OCI-LY7 (cell line): ENCODE measurements at regions of chr6 and their contacts with region 1.

Region 1: GRCh38 chr6:134063966-134064445 is 11.6 kb upstream of the SLC2A12 start:
- DNase-seq: peak; percentile 69
- H3K4me3 ChIP-seq: no peak overlapping the region
- H3K27ac ChIP-seq: no peak overlapping the region
- H3K4me1 ChIP-seq: no peaks in the 10 kb centered on the region
- CTCF ChIP-seq: peak; percentile 90

Region 2: DNA sequence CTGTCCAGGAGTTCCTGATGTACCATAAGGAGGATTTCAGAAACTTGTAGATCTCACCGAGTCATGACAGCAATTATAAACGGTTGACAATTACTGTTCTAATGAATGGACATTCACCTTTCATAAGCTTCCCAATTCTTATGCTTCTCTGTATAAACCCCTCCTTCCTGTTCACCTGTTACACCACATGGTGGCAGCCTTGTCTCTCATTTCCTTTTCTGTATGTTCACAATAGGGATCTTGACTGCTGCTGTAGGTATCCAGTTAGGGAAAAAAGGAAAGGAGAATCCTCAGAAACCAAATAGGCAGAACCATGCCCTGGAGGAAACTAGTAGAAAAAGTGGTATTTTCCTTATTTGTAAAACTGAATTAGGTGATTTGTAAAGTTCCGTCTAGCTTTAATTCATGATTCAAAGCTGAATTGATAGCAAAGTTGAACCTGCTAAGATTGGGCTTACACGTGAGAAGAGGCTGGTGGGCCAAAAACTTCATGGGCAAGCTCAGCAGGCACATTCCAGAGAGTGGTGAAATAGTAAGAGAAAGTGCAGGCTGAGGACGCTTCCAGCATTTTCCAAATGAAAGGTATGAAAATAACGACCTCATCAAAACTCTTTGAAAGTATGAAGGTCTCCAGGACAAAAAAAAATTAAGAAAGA is 139.9 kb before region 1 on chr6:
- CTCF ChIA-PET with region 1: interaction called, 13 read pairs
- POLR2A ChIA-PET with region 1: interaction called, 9 read pairs
- intact Hi-C with region 1: loop called (anchors 1 kb)
- DNase-seq: peak; percentile 69
- H3K4me3 ChIP-seq: no peak overlapping the region
- H3K27ac ChIP-seq: no peak overlapping the region
- H3K4me1 ChIP-seq: no peaks in the 10 kb centered on the region
- CTCF ChIP-seq: peak; percentile 98